ENCODE measurements at regions of chr16 and their contacts with region 1.

Region 1: GRCh38 chr16:74309789-74310781 is 13.5 kb downstream of the PSMD7 start:
- DNase-seq: no peak
- H3K4me3 Mint-ChIP-seq: no peak overlapping the region
- H3K27ac Mint-ChIP-seq: no peak overlapping the region
- H3K4me1 Mint-ChIP-seq: peaks cover 7% of the 10 kb centered on the region
- H3K27me3 Mint-ChIP-seq: no peaks in the 10 kb centered on the region

Region 2: DNA sequence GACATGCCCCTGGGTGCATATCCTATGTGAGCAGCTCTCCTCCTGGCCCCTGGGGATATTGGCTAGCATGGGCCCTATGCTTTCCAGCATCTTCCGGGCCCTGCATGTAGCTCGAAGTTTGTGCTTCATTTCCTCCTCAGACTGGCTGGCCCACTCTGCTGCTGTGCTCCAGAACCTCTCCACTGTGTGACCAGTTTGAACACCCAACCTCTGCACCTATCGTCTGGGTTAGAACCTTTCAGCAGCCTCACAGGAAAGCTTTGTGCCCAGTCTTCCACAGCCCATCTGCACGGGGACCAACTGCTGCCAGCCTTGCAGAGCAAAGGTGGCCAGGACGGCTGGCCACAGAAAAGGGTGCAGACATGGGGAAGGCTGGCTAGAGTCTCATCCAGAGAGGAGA is 121.4 kb after region 1 on chr16:
- CTCF ChIA-PET with region 1: no interaction called
- POLR2A ChIA-PET with region 1: no interaction called
- intact Hi-C with region 1: loop called (anchors 5 kb)
- DNase-seq: no peak
- H3K4me3 Mint-ChIP-seq: no peak overlapping the region
- H3K27ac Mint-ChIP-seq: no peak overlapping the region
- H3K4me1 Mint-ChIP-seq: no peaks in the 10 kb centered on the region
- H3K27me3 Mint-ChIP-seq: no peaks in the 10 kb centered on the region

Region 3: GRCh38 chr16:74726716-74727115 is 416.6 kb after region 1 on chr16:
- CTCF ChIA-PET with region 1: no interaction called
- POLR2A ChIA-PET with region 1: no interaction called
- intact Hi-C with region 1: no loop called
- DNase-seq: peak; percentile 65
- H3K4me3 Mint-ChIP-seq: no peak overlapping the region
- H3K27ac Mint-ChIP-seq: no peak overlapping the region
- H3K4me1 Mint-ChIP-seq: peaks cover 6% of the 10 kb centered on the region
- H3K27me3 Mint-ChIP-seq: peaks cover 3% of the 10 kb centered on the region

Measured in activated CD4-positive, alpha-beta memory T cell treated with anti-CD3 and anti-CD28 coated beads for 36 hours (primary cell).